ENCODE measurements at regions of chr1 and their contacts with region 1.

Region 1: GRCh38 chr1:240732390-240732789 is 120.4 kb upstream of the GREM2 start:
- DNase-seq: no peak
- H3K4me3 ChIP-seq: no peak overlapping the region
- H3K27me3 ChIP-seq: no peaks in the 10 kb centered on the region
- CTCF ChIP-seq: peak; percentile 62

Region 2: GRCh38 chr1:240803151-240803550 is 70.8 kb after region 1 on chr1:
- CTCF ChIA-PET with region 1: no interaction called
- POLR2A ChIA-PET with region 1: no interaction called
- DNase-seq: no peak
- H3K4me3 ChIP-seq: no peak overlapping the region
- H3K27me3 ChIP-seq: no peaks in the 10 kb centered on the region
- CTCF ChIP-seq: no peak

Region 3: DNA sequence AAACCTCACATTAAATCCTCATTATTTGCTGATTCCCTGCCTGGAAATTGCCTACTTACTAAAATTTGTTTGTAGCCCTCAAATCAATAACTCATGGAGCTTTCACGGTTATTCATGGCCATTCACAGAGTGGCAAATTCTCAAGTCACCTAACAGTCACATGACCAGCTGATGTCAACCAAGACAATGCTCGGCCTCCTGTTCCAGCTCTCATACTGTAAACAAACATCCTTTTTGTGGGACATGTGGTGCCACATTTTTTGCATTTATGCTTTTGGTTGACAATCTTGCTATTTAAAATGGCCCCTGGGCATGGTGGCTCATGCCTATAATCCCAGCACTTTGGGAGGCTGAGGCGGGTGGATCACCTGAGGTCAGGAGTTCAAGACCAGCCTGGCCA is 151.1 kb after region 1 on chr1:
- CTCF ChIA-PET with region 1: interaction called, 11 read pairs
- POLR2A ChIA-PET with region 1: no interaction called
- DNase-seq: no peak
- H3K4me3 ChIP-seq: no peak overlapping the region
- H3K27me3 ChIP-seq: no peaks in the 10 kb centered on the region
- CTCF ChIP-seq: no peak

Region 4: DNA sequence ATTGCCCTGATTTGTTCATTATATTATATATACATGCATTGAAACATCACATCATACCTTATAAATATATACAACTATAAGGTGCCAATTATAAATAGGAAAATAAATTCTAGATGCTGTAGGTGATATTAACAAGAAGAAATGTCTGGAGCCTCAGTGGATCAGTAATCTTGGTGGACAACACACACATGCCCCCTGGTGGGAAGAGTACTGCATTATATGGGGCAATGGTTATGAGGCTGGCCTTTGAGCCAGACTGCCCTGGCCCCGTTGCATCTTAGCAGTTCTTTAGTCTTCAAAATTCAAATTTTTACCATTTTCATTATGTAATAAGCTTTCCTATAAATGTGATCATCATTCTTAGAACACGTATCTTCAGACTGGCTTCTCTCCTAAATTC is 214.5 kb after region 1 on chr1:
- CTCF ChIA-PET with region 1: interaction called, 57 read pairs
- POLR2A ChIA-PET with region 1: no interaction called
- DNase-seq: no peak
- H3K4me3 ChIP-seq: no peak overlapping the region
- H3K27me3 ChIP-seq: no peaks in the 10 kb centered on the region
- CTCF ChIP-seq: peak; percentile 73